Sigmoid colon (tissue), 7 donors: ENCODE measurements at regions of chr3 and their contacts with region 1.

Region 1: GRCh38 chr3:8441969-8442559 is 59.6 kb upstream of the LMCD1 start:
- DNase-seq: no peak
- H3K4me3 ChIP-seq: no peak overlapping the region
- H3K27ac ChIP-seq: peak overlapping the region in 1 of 4 donors; percentile 76
- H3K4me1 ChIP-seq: peaks cover 0 to 40% (median 33%) of the 10 kb centered on the region in 4 donors
- H3K27me3 ChIP-seq: no peaks in the 10 kb centered on the region
- CTCF ChIP-seq: peak; percentile 51 to 72 (median 64)
- EP300 ChIP-seq: no peak
- POLR2A ChIP-seq: no peak

Region 2: DNA sequence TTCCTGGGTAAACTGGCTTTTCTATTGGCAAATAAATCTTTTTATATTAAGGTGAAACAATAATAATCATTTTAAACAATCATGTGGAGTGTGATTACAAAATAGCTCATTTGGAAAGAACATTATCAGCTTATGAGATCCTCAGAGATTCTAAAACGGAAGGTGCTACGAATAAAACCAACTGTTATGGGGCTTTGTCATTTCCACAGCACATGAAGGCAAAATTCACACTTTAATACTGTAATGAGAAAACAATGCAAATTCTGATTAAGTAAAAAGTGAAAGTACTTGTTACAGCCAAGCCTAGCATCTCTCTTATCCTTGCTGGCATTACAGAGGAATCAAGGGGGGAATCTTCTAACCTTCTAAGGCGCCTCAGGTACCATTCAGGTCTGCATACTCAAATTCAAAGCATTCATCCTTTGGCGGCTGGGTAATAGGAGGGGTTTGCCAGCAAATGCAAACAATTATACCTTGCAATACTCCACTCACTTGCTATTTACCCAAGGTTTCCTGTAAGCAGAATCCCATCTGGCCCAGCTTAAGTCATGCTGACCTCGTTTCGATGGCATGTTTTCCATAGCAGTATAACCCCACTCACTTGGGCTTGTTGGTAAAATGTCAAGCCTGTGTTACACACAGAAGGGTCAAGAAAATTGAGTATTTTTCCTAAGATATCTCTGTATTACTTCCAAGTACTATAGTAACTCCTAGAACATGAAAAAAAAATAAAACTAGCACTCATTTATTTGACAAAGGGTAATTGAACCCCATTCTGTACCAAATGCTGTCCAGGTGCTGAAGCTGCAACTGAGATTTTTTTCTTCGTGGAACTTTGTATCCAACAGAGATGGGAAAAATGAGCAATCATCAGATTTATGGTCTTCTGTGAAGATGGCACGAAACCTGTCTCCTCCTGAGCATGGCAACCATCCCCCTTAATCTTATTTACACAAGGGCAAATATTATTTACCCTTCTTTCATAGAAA is 124.1 kb before region 1 on chr3:
- intact Hi-C with region 1: no loop called
- DNase-seq: no peak
- H3K4me3 ChIP-seq: no peak overlapping the region
- H3K27ac ChIP-seq: no peak overlapping the region
- H3K4me1 ChIP-seq: no peaks in the 10 kb centered on the region
- H3K27me3 ChIP-seq: no peaks in the 10 kb centered on the region
- CTCF ChIP-seq: no peak
- EP300 ChIP-seq: no peak
- POLR2A ChIP-seq: no peak

Region 3: GRCh38 chr3:8501371-8502131 is 59.5 kb after region 1 on chr3 and contains the start of gene LMCD1:
- intact Hi-C with region 1: loop called (anchors 5 kb)
- DNase-seq: peak; percentile 97
- H3K4me3 ChIP-seq: peak within 1 kb of the TSS; percentile 31 to 56 (median 50)
- H3K27ac ChIP-seq: peak within 1 kb of the TSS; percentile 80 to 86 (median 82)
- H3K4me1 ChIP-seq: peaks cover 0 to 31% (median 24%) of the 10 kb centered on the region in 4 donors
- H3K27me3 ChIP-seq: no peaks in the 10 kb centered on the region
- CTCF ChIP-seq: peak in 1 of 4 experiments; percentile 41
- EP300 ChIP-seq: no peak
- POLR2A ChIP-seq: peak in 1 of 2 donors; percentile 16
- total RNA-seq, gene LMCD1: 9.7 to 49.3 (median 19.5) TPM

Region 4: GRCh38 chr3:8607234-8608040 is 165.4 kb after region 1 on chr3:
- intact Hi-C with region 1: loop called (anchors 1 kb)
- DNase-seq: no peak
- H3K4me3 ChIP-seq: no peak overlapping the region
- H3K27ac ChIP-seq: no peak overlapping the region
- H3K4me1 ChIP-seq: peaks cover 0 to 17% (median 12%) of the 10 kb centered on the region in 4 donors
- H3K27me3 ChIP-seq: no peaks in the 10 kb centered on the region
- CTCF ChIP-seq: peak in 3 of 4 experiments; percentile 33 to 37 (median 34)
- EP300 ChIP-seq: no peak
- POLR2A ChIP-seq: no peak

Region 5: GRCh38 chr3:8622873-8623691 is 181.0 kb after region 1 on chr3:
- intact Hi-C with region 1: loop called (anchors 1 kb)
- DNase-seq: peak; percentile 64
- H3K4me3 ChIP-seq: no peak overlapping the region
- H3K27ac ChIP-seq: no peak overlapping the region
- H3K4me1 ChIP-seq: peaks cover 0 to 9% (median 7%) of the 10 kb centered on the region in 4 donors
- H3K27me3 ChIP-seq: no peaks in the 10 kb centered on the region
- CTCF ChIP-seq: peak; percentile 65 to 93 (median 88)
- EP300 ChIP-seq: no peak
- POLR2A ChIP-seq: no peak

Region 6: GRCh38 chr3:9249273-9250192 is 807.5 kb after region 1 on chr3 and contains the start of gene SRGAP3:
- intact Hi-C with region 1: no loop called
- DNase-seq: peak; percentile 92
- H3K4me3 ChIP-seq: peak within 1 kb of the TSS; percentile 30 to 54 (median 46)
- H3K27ac ChIP-seq: peak within 1 kb of the TSS; percentile 43 to 61 (median 52)
- H3K4me1 ChIP-seq: peaks cover 0 to 20% (median 16%) of the 10 kb centered on the region in 4 donors
- H3K27me3 ChIP-seq: no peaks in the 10 kb centered on the region
- CTCF ChIP-seq: peak in 3 of 4 experiments; percentile 35 to 67 (median 35)
- EP300 ChIP-seq: no peak
- POLR2A ChIP-seq: peak in 1 of 2 donors; percentile 31
- total RNA-seq, gene SRGAP3: 5.8 to 7.7 (median 6.6) TPM